Caco-2 (cell line): ENCODE measurements at regions of chr11 and their contacts with region 1.

Region 1: DNA sequence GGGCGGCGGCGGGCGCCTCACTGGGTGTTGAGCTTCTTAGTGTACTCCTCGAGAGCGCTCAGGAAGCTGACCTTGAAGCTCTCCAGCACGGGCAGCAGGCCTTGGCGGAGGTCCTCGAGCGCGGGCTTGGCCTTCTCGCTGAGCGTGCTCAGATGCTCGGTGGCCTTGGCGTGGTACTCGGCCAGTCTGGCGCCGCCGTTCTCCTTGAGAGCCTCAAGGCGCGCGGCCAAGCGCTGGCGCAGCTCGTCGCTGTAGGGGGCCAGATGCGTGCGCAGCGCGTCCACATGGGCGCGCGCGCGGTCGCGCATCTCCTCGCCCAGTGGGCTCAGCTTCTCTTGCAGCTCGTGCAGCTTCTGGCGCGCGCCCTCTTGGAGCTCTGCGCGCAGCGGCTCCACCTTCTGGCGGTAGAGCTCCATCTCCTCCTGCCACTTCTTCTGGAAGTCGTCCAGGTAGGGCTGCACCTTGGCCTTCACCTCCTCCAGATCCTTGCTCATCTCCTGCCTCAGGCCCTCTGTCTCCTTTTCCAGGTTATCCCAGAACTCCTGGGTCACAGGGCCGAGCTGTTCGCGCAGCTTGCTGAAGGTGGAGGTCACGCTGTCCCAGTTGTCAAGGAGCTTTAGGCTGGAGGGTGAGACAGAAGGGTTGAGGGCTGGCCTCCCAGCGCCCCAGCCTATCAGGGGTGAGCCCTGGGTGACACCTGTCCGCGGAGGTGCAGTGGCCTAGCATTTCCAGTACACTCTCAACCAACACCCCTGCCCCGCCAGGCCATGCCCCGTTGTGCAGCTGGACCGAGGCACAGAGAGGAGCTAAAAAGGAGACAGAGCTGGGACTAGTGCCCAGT is 1.4 kb downstream of the APOA1 start:
- DNase-seq: peak; percentile 69 to 77
- H3K4me3 ChIP-seq: peak overlapping the region; percentile 40
- H3K4me3 Mint-ChIP-seq: peak overlapping the region; percentile 68
- H3K27ac Mint-ChIP-seq: peak overlapping the region; percentile 92
- H3K4me1 ChIP-seq: peaks cover 86% of the 10 kb centered on the region
- H3K4me1 Mint-ChIP-seq: peaks cover 65% of the 10 kb centered on the region
- H3K27me3 ChIP-seq: no peaks in the 10 kb centered on the region
- H3K27me3 Mint-ChIP-seq: no peaks in the 10 kb centered on the region
- CTCF ChIP-seq: peak; percentile 51

Region 2: GRCh38 chr11:116732271-116733042 is 103.6 kb before region 1 on chr11:
- CTCF ChIA-PET with region 1: interaction called, 5 read pairs
- POLR2A ChIA-PET with region 1: no interaction called
- intact Hi-C with region 1: loop called (anchors 5 kb)
- DNase-seq: peak; percentile 80 to 84
- H3K4me3 ChIP-seq: no peak overlapping the region
- H3K4me3 Mint-ChIP-seq: no peak overlapping the region
- H3K27ac Mint-ChIP-seq: no peak overlapping the region
- H3K4me1 ChIP-seq: peaks cover 9% of the 10 kb centered on the region
- H3K4me1 Mint-ChIP-seq: peaks cover 15% of the 10 kb centered on the region
- H3K27me3 ChIP-seq: no peaks in the 10 kb centered on the region
- H3K27me3 Mint-ChIP-seq: peaks cover 9% of the 10 kb centered on the region
- CTCF ChIP-seq: peak; percentile 97 to 98

Region 3: GRCh38 chr11:116787786-116788486 is 48.1 kb before region 1 on chr11 and contains the start of gene ZPR1:
- CTCF ChIA-PET with region 1: interaction called, 50 read pairs
- POLR2A ChIA-PET with region 1: interaction called, 24 read pairs
- intact Hi-C with region 1: loop called (anchors 1 kb)
- DNase-seq: peak; percentile 84 to 90
- H3K4me3 ChIP-seq: peak within 1 kb of the TSS; percentile 80
- H3K4me3 Mint-ChIP-seq: peak within 1 kb of the TSS; percentile 80
- H3K27ac Mint-ChIP-seq: peak within 1 kb of the TSS; percentile 94
- H3K4me1 ChIP-seq: peaks cover 46% of the 10 kb centered on the region
- H3K4me1 Mint-ChIP-seq: peaks cover 42% of the 10 kb centered on the region
- H3K27me3 ChIP-seq: no peaks in the 10 kb centered on the region
- H3K27me3 Mint-ChIP-seq: no peaks in the 10 kb centered on the region
- CTCF ChIP-seq: no peak
- total RNA-seq, gene ZPR1: 168 and 194 TPM in 2 replicates